CD8-positive, alpha-beta memory T cell (primary cell): ENCODE measurements at regions of chr1 and their contacts with region 1.

Region 1: GRCh38 chr1:28573564-28573963 is 18.5 kb upstream of the RAB42 start:
- DNase-seq: no peak
- H3K4me3 ChIP-seq: no peak overlapping the region
- H3K4me3 Mint-ChIP-seq: no peak overlapping the region
- H3K27ac ChIP-seq: no peak overlapping the region
- H3K27ac Mint-ChIP-seq: no peak overlapping the region
- H3K4me1 ChIP-seq: peaks cover 5% of the 10 kb centered on the region
- H3K4me1 Mint-ChIP-seq: peaks cover 8 to 16% (median 15%) of the 10 kb centered on the region in 3 donors
- H3K27me3 ChIP-seq: no peaks in the 10 kb centered on the region
- H3K27me3 Mint-ChIP-seq: no peaks in the 10 kb centered on the region

Region 2: GRCh38 chr1:28552758-28553663 is 20.6 kb before region 1 on chr1 and contains the start of gene TRNAU1AP:
- CTCF ChIA-PET with region 1: interaction called, 4 read pairs
- POLR2A ChIA-PET with region 1: interaction called, 17 read pairs
- DNase-seq: peak; percentile 95 to 97 (median 97)
- H3K4me3 ChIP-seq: peak within 1 kb of the TSS; percentile 98
- H3K4me3 Mint-ChIP-seq: peak within 1 kb of the TSS; percentile 97 to 100 (median 99)
- H3K27ac ChIP-seq: peak within 1 kb of the TSS; percentile 91
- H3K27ac Mint-ChIP-seq: peak within 1 kb of the TSS; percentile 94 to 99 (median 98)
- H3K4me1 ChIP-seq: peaks cover 19% of the 10 kb centered on the region
- H3K4me1 Mint-ChIP-seq: peaks cover 20 to 37% (median 21%) of the 10 kb centered on the region in 3 donors
- H3K27me3 ChIP-seq: no peaks in the 10 kb centered on the region
- H3K27me3 Mint-ChIP-seq: no peaks in the 10 kb centered on the region
- total RNA-seq, gene TRNAU1AP: 46.0 to 49.6 TPM

Region 3: GRCh38 chr1:29096231-29096886 is 522.8 kb after region 1 on chr1:
- CTCF ChIA-PET with region 1: no interaction called
- POLR2A ChIA-PET with region 1: no interaction called
- DNase-seq: no peak
- H3K4me3 ChIP-seq: no peak overlapping the region
- H3K4me3 Mint-ChIP-seq: no peak overlapping the region
- H3K27ac ChIP-seq: no peak overlapping the region
- H3K27ac Mint-ChIP-seq: peak overlapping the region in 2 of 8 donors; percentile 20 to 39
- H3K4me1 ChIP-seq: no peaks in the 10 kb centered on the region
- H3K4me1 Mint-ChIP-seq: peaks cover 6 to 14% (median 8%) of the 10 kb centered on the region in 3 donors
- H3K27me3 ChIP-seq: no peaks in the 10 kb centered on the region
- H3K27me3 Mint-ChIP-seq: peaks cover 0 to 5% of the 10 kb centered on the region in 2 donors